Naive thymus-derived CD4-positive, alpha-beta T cell (primary cell): ENCODE measurements at regions of chr17 and their contacts with region 1.

Region 1: DNA sequence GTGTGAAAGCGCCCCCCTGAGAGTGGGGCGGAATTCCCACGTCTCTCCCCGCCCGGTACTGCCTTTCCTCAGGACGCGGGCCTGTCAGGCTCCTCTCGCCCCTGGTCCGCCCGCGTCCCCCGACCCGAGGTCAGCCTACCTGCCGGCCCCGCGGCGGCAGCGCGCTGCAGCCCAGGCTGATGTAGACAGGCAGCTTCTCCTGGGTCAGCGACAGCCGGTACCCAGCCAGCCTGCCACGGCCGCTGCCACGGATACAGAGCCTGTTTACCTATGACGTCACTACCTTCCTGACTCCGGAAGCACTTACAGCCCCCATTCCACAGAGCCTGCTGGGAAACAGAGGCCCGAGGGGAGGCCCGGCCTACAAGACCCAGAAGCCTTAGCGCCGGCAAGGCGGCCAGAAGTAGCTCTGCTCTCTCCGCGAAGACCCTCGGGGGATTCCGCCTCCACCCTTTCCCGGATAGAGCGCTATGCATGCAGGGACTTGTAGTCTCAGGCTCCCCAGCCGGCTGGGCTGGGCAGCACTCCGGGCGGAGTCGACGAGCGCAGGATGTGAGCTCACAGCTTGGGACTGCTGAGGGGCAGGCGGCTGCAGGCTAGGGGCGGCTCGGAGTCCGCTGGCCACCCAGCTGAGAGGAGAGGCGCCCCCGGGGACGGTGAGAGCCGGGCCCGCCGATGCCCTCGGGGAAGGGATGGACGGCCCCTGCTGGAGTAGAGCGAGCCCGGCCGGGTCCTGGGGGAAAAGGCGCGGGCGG is at the starts of genes IFT20 and TNFAIP1:
- DNase-seq: peak; percentile 86 to 100 (median 98)
- ATAC-seq: peak; percentile 98
- H3K4me3 ChIP-seq: peak within 1 kb of the TSS; percentile 79
- H3K4me3 Mint-ChIP-seq: peak within 1 kb of the TSS; percentile 86 to 99 (median 97)
- H3K27ac ChIP-seq: peak within 1 kb of the TSS; percentile 95
- H3K27ac Mint-ChIP-seq: peak within 1 kb of the TSS; percentile 91 to 98 (median 97)
- H3K4me1 ChIP-seq: peaks cover 16 to 19% of the 10 kb centered on the region in 2 donors
- H3K4me1 Mint-ChIP-seq: peaks cover 31 to 63% (median 59%) of the 10 kb centered on the region in 7 donors
- H3K27me3 ChIP-seq: no peaks in the 10 kb centered on the region
- H3K27me3 Mint-ChIP-seq: no peaks in the 10 kb centered on the region
- total RNA-seq, gene IFT20: 24.7 to 56.2 (median 37.0) TPM
- total RNA-seq, gene TNFAIP1: 8.0 to 26.9 (median 25.9) TPM

Region 2: DNA sequence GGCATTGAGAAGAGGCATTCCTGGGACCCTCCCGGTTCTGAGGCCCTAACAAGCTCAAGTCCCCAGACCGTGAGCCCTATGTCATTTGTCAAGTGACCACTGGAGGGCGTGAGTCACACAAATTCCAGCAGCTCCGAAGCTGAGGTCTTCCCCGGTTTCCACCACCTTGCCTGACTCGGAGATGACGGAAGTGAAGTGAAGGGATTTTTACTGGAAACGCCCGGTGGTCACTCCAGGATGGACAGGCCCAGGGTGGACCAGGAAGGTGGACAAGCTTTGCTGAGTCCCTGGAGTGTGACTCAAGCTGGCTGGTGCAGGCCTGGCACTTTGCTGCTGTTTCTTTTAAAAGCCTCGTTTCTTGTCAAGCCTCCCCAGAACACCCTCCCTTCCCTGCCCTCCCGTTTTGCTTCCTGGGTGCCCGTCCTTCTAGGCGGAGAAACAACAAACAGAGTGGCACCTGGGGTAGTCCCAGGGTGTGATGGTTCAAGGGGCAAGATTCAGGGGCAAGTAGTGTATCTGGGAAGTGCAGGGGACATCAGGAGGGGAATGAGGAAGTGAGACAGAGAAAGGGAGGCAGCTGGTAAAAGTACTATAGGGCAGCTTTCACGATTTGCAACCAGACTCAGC is 529.7 kb before region 1 on chr17:
- CTCF ChIA-PET with region 1: no interaction called
- POLR2A ChIA-PET with region 1: interaction called, 3 read pairs
- intact Hi-C with region 1: loop called in 1 of 2 experiments (anchors 1 kb)
- DNase-seq: peak; percentile 60 to 87 (median 79)
- ATAC-seq: peak; percentile 83
- H3K4me3 ChIP-seq: peak overlapping the region; percentile 57
- H3K4me3 Mint-ChIP-seq: peak overlapping the region; percentile 77 to 90 (median 85)
- H3K27ac ChIP-seq: peak overlapping the region; percentile 70
- H3K27ac Mint-ChIP-seq: peak overlapping the region; percentile 81 to 98 (median 95)
- H3K4me1 ChIP-seq: peaks cover 24 to 25% of the 10 kb centered on the region in 2 donors
- H3K4me1 Mint-ChIP-seq: peaks cover 20 to 45% (median 29%) of the 10 kb centered on the region in 7 donors
- H3K27me3 ChIP-seq: no peaks in the 10 kb centered on the region
- H3K27me3 Mint-ChIP-seq: peaks cover 0 to 5% (median 0%) of the 10 kb centered on the region in 5 donors

Region 3: DNA sequence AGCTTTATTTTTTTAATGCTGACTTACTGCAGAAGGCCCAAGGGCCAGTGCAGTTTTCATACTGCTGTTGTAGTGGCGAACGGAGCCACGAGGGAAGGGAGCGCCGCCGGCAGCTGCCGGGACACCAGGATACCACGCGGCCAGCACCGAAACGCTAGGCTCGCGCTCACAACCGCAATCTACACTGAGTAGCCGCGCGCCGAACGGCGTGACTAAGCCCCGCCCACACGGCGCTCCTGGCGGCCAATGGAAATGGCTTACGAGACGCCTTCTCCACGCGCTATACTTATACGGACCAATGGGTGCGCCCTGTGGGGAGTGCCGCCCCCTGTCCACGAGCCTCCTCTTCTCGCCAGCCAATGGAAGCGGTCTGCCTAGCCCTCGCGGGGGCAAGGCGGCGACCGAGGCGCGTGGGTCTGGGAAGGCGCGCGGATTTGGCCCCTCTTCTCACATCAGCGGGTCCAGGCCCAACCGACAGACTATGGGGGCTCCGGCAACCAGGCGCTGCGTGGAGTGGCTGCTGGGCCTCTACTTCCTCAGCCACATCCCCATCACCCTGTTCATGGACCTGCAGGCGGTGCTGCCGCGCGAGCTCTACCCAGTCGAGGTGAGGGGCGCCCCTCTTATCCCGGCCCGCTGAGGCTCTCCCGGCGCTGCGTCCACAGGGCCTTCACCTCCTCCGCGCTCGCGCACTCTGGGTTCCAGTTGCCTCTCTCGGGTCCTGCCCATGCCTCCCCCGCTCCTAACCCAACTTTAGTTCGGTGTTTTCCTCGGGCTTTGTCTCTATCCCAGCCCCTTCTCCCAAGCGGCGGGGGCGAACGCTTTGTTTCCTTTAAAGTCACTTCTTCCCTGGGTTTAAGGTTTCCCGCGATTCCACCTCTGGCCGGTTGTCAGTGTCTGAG is 16.4 kb before region 1 on chr17 and contains the start of gene TMEM97:
- CTCF ChIA-PET with region 1: interaction called, 3 read pairs
- POLR2A ChIA-PET with region 1: interaction called, 8 read pairs
- intact Hi-C with region 1: loop called (anchors 1 kb)
- DNase-seq: peak; percentile 83 to 95 (median 93)
- ATAC-seq: peak; percentile 99
- H3K4me3 ChIP-seq: peak within 1 kb of the TSS; percentile 69
- H3K4me3 Mint-ChIP-seq: peak within 1 kb of the TSS; percentile 77 to 97 (median 91)
- H3K27ac ChIP-seq: peak within 1 kb of the TSS; percentile 64
- H3K27ac Mint-ChIP-seq: peak within 1 kb of the TSS; percentile 37 to 90 (median 80)
- H3K4me1 ChIP-seq: peaks cover 11 to 12% of the 10 kb centered on the region in 2 donors
- H3K4me1 Mint-ChIP-seq: peaks cover 9 to 40% (median 21%) of the 10 kb centered on the region in 7 donors
- H3K27me3 ChIP-seq: no peaks in the 10 kb centered on the region
- H3K27me3 Mint-ChIP-seq: no peaks in the 10 kb centered on the region
- total RNA-seq, gene TMEM97: 2.9 to 19.9 (median 4.8) TPM

Region 4: DNA sequence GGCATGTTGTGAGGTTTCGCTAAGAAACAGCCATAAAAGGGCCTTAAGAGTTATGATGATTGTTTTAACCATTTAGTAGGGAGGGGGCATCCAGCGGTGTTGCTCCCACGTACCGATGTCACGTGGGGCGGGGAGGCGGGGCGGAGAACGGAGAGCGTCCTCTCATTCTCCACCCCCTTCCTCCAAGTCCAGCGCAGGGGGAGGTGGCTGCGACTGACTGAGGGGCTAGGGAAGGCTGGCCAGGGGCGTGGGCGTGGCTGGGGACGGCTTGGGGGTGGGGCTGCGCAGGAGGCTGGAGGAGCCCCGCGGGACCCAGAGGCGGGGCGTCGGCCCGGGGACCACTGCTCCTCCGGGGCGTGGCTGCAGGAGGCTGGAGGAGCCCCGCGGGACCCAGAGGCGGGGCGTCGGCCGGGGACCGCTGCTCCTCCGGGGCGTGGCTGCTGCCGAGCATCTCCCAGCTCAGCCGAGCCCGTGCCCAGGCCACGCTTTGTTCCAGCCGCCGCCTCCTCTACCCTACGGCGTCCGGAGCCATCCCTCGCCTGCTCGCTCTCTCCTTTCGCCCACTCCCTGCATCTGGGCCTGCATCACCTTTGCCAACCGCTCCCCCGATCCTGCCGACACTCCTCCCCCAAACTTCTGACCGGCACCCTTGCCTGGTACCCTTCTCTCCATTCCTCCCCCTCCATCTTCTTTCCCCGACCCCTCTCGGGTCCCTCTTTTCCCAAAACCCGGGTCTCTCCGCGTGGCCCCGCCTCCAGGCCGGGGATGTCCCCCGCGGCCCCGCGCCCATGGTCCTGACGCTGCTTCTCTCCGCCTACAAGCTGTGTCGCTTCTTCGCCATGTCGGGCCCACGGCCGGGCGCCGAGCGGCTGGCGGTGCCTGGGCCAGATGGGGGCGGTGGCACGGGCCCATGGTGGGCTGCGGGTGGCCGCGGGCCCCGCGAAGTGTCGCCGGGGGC is 36.1 kb after region 1 on chr17 and contains the start of gene SARM1:
- CTCF ChIA-PET with region 1: no interaction called
- POLR2A ChIA-PET with region 1: interaction called, 3 read pairs
- intact Hi-C with region 1: loop called (anchors 1 kb)
- DNase-seq: peak; percentile 52 to 90 (median 64)
- ATAC-seq: peak; percentile 91
- H3K4me3 ChIP-seq: peak within 1 kb of the TSS; percentile 78
- H3K4me3 Mint-ChIP-seq: peak within 1 kb of the TSS; percentile 88 to 98 (median 94)
- H3K27ac ChIP-seq: peak within 1 kb of the TSS; percentile 88
- H3K27ac Mint-ChIP-seq: peak within 1 kb of the TSS; percentile 66 to 97 (median 93)
- H3K4me1 ChIP-seq: peaks cover 9 to 11% of the 10 kb centered on the region in 2 donors
- H3K4me1 Mint-ChIP-seq: peaks cover 10 to 25% (median 18%) of the 10 kb centered on the region in 7 donors
- H3K27me3 ChIP-seq: no peaks in the 10 kb centered on the region
- H3K27me3 Mint-ChIP-seq: no peaks in the 10 kb centered on the region
- total RNA-seq, gene SARM1: 21.8 to 34.1 (median 27.2) TPM

Region 5: GRCh38 chr17:28425211-28425610 is 89.8 kb after region 1 on chr17:
- CTCF ChIA-PET with region 1: no interaction called
- POLR2A ChIA-PET with region 1: no interaction called
- intact Hi-C with region 1: no loop called
- DNase-seq: no peak
- ATAC-seq: no peak
- H3K4me3 ChIP-seq: no peak overlapping the region
- H3K4me3 Mint-ChIP-seq: no peak overlapping the region
- H3K27ac ChIP-seq: no peak overlapping the region
- H3K27ac Mint-ChIP-seq: no peak overlapping the region
- H3K4me1 ChIP-seq: no peaks in the 10 kb centered on the region
- H3K4me1 Mint-ChIP-seq: peaks cover 0 to 3% (median 0%) of the 10 kb centered on the region in 7 donors
- H3K27me3 ChIP-seq: no peaks in the 10 kb centered on the region
- H3K27me3 Mint-ChIP-seq: peaks cover 0 to 8% (median 0%) of the 10 kb centered on the region in 5 donors

Region 6: GRCh38 chr17:28460901-28461300 is 125.5 kb after region 1 on chr17:
- CTCF ChIA-PET with region 1: no interaction called
- POLR2A ChIA-PET with region 1: no interaction called
- intact Hi-C with region 1: no loop called
- DNase-seq: no peak
- ATAC-seq: no peak
- H3K4me3 ChIP-seq: no peak overlapping the region
- H3K4me3 Mint-ChIP-seq: no peak overlapping the region
- H3K27ac ChIP-seq: no peak overlapping the region
- H3K27ac Mint-ChIP-seq: no peak overlapping the region
- H3K4me1 ChIP-seq: no peaks in the 10 kb centered on the region
- H3K4me1 Mint-ChIP-seq: no peaks in the 10 kb centered on the region
- H3K27me3 ChIP-seq: no peaks in the 10 kb centered on the region
- H3K27me3 Mint-ChIP-seq: peaks cover 0 to 15% (median 2%) of the 10 kb centered on the region in 5 donors

Region 7: GRCh38 chr17:28552246-28552999 is 217.0 kb after region 1 on chr17 and contains the start of gene UNC119:
- CTCF ChIA-PET with region 1: no interaction called
- POLR2A ChIA-PET with region 1: no interaction called
- intact Hi-C with region 1: loop called in 1 of 2 experiments (anchors 10 kb)
- DNase-seq: peak; percentile 59 to 87 (median 76)
- ATAC-seq: peak; percentile 84
- H3K4me3 ChIP-seq: peak within 1 kb of the TSS; percentile 54
- H3K4me3 Mint-ChIP-seq: peak within 1 kb of the TSS; percentile 85 to 100 (median 92)
- H3K27ac ChIP-seq: peak within 1 kb of the TSS; percentile 89
- H3K27ac Mint-ChIP-seq: peak within 1 kb of the TSS; percentile 91 to 98 (median 95)
- H3K4me1 ChIP-seq: peaks cover 35 to 44% of the 10 kb centered on the region in 2 donors
- H3K4me1 Mint-ChIP-seq: peaks cover 42 to 62% (median 54%) of the 10 kb centered on the region in 7 donors
- H3K27me3 ChIP-seq: no peaks in the 10 kb centered on the region
- H3K27me3 Mint-ChIP-seq: no peaks in the 10 kb centered on the region
- total RNA-seq, gene UNC119: 40.6 to 108 (median 90.2) TPM

Region 8: DNA sequence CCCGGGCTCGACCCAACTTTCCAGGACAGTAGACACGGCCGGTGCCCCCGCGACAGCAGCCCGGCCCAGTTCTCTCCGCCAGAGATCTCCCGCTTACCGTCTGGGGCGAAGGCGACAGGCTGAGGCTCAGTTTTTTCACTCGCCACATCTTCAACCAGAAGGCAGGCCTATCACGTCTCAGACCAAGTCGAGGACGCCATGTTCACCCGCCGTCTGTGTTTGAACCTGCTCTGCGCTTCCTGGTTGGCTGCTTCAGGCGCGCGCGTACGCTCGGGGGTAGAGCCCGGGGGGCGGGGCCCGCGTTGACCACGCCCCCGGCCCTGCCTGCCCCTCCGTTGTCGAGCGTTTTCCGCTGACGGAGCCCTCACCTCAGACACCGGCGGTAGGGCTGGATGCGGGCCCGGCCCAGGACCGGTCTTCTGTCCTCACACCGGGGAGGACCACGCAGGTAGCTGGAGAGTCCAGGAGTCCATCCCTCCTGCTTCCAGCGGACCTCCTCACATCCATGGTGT is 263.5 kb after region 1 on chr17 and contains the start of gene SPAG5:
- CTCF ChIA-PET with region 1: no interaction called
- POLR2A ChIA-PET with region 1: no interaction called
- intact Hi-C with region 1: loop called in 1 of 2 experiments (anchors 1 kb)
- DNase-seq: peak; percentile 93 to 97 (median 96)
- ATAC-seq: peak; percentile 98
- H3K4me3 ChIP-seq: peak within 1 kb of the TSS; percentile 93
- H3K4me3 Mint-ChIP-seq: peak within 1 kb of the TSS; percentile 88 to 99 (median 94)
- H3K27ac ChIP-seq: peak within 1 kb of the TSS; percentile 97
- H3K27ac Mint-ChIP-seq: peak within 1 kb of the TSS; percentile 96 to 99 (median 98)
- H3K4me1 ChIP-seq: peaks cover 8 to 10% of the 10 kb centered on the region in 2 donors
- H3K4me1 Mint-ChIP-seq: peaks cover 18 to 25% (median 21%) of the 10 kb centered on the region in 7 donors
- H3K27me3 ChIP-seq: no peaks in the 10 kb centered on the region
- H3K27me3 Mint-ChIP-seq: no peaks in the 10 kb centered on the region
- total RNA-seq, gene SPAG5: 10.4 to 95.3 (median 18.4) TPM

Region 9: DNA sequence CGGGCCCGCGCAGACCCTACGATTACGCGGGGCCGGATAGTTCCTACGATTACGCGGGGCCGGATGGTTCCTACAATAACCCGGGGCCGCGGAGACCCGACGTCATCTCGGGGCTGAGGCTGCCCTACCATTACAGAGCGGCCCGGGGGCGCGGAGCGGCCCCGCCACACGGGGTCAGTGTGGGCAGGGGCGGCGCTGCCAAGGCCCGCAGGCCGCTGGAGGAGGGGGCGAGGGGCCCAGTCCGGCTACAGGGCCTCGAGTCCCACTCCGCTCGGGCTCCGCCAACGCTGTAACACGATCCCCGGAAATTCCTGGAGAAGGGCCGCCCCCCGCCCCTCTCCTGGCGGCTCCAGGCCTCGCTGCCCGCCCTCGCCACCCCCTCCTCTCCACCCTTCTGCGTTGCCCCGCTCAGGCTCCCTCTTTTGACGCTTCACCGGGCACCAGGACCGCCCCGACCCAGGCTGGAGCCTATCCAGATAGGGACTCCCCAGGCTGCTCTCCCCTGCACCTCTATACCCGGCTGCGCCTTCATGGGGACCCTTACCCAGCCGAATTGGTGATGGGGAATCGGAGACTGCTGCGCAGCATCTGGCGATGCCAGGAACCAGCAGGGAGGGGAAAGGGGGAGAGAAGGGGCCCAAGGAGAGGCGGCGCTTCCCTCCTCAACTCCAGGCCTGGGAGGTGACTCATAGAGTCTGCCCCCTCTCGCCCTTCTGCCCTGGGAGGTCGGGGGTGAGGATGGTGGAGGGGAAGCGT is 382.4 kb after region 1 on chr17 and contains the start of gene RAB34:
- CTCF ChIA-PET with region 1: no interaction called
- POLR2A ChIA-PET with region 1: interaction called, 3 read pairs
- intact Hi-C with region 1: loop called in 1 of 2 experiments (anchors 2 kb)
- DNase-seq: peak in 2 of 9 donors; percentile 18 to 21
- ATAC-seq: no peak
- H3K4me3 ChIP-seq: no peak within 1 kb of the TSS
- H3K4me3 Mint-ChIP-seq: peak within 1 kb of the TSS; percentile 58 to 99 (median 76)
- H3K27ac ChIP-seq: peak within 1 kb of the TSS; percentile 52
- H3K27ac Mint-ChIP-seq: peak within 1 kb of the TSS; percentile 59 to 97 (median 85)
- H3K4me1 ChIP-seq: peaks cover 26 to 30% of the 10 kb centered on the region in 2 donors
- H3K4me1 Mint-ChIP-seq: peaks cover 17 to 57% (median 35%) of the 10 kb centered on the region in 7 donors
- H3K27me3 ChIP-seq: no peaks in the 10 kb centered on the region
- H3K27me3 Mint-ChIP-seq: peaks cover 0 to 24% (median 6%) of the 10 kb centered on the region in 5 donors
- total RNA-seq, gene RAB34: 11.0 to 50.2 (median 16.4) TPM